Ascending aorta (tissue), 2 donors: ENCODE measurements at regions of chr14 and their contacts with region 1.

Region 1: GRCh38 chr14:20989572-20990551 is at the start of gene METTL17:
- DNase-seq: peak; percentile 65 to 97
- H3K4me3 ChIP-seq: peak within 1 kb of the TSS; percentile 88 to 97
- H3K27ac ChIP-seq: peak within 1 kb of the TSS; percentile 88 to 94
- H3K4me1 ChIP-seq: peaks cover 27 to 38% of the 10 kb centered on the region in 2 donors
- H3K27me3 ChIP-seq: no peaks in the 10 kb centered on the region
- CTCF ChIP-seq: no peak
- total RNA-seq, gene METTL17: 38.8 TPM

Region 2: DNA sequence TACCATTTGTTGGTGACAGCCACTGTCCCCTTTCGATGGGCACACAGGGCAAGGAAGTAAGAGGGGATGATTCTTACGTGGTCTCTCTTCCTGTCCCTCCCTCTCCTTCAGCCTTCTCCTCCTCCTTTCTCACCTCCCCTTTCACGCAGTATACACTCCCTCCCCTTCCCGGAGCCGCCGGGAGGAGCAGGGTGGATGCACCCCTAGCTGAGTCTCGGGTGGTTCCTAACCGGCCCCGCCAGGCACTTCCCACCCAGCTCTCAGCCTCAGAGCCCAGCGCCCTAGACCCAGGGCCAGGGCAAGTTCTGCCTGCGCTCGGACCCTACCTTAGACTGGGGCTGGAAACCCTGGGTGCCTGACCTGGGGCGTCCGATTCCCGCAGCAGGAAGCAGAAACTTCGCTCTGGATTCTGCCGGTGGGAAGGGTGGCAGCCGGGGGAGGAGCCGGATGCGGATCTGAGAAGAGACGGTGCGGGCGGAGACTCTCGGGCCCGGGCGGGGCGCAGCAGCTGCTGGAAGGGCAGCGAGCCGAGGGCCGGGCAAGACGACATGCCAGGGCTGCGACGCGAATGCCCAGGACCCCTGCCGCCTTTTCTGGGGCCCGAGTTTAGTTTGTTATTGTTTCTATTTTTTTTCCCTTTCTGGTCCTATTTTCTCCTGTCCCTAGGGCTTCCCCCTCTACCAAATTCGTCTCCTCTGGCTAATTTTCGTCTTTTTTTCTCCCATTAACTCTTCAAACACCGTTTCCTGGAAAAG is 576.6 kb before region 1 on chr14 and contains the start of gene TEP1:
- intact Hi-C with region 1: loop called (anchors 5 kb)
- DNase-seq: peak; percentile 45 to 95
- H3K4me3 ChIP-seq: peak within 1 kb of the TSS; percentile 85 to 88
- H3K27ac ChIP-seq: peak within 1 kb of the TSS; percentile 97 to 98
- H3K4me1 ChIP-seq: peaks cover 0 to 5% of the 10 kb centered on the region in 2 donors
- H3K27me3 ChIP-seq: no peaks in the 10 kb centered on the region
- CTCF ChIP-seq: no peak
- total RNA-seq, gene TEP1: 43.7 TPM

Region 3: GRCh38 chr14:20789230-20789813 is 200.5 kb before region 1 on chr14:
- intact Hi-C with region 1: no loop called
- DNase-seq: no peak
- H3K4me3 ChIP-seq: no peak overlapping the region
- H3K27ac ChIP-seq: no peak overlapping the region
- H3K4me1 ChIP-seq: no peaks in the 10 kb centered on the region
- H3K27me3 ChIP-seq: no peaks in the 10 kb centered on the region
- CTCF ChIP-seq: no peak

Region 4: GRCh38 chr14:20846560-20846959 is 143.3 kb before region 1 on chr14:
- intact Hi-C with region 1: no loop called
- DNase-seq: no peak
- H3K4me3 ChIP-seq: no peak overlapping the region
- H3K27ac ChIP-seq: no peak overlapping the region
- H3K4me1 ChIP-seq: no peaks in the 10 kb centered on the region
- H3K27me3 ChIP-seq: no peaks in the 10 kb centered on the region
- CTCF ChIP-seq: no peak

Region 5: GRCh38 chr14:21024585-21025370 is 34.9 kb after region 1 on chr14 and contains the start of gene NDRG2:
- intact Hi-C with region 1: loop called (anchors 1 kb)
- DNase-seq: peak in 1 of 2 donors; percentile 85
- H3K4me3 ChIP-seq: peak within 1 kb of the TSS; percentile 67 to 93
- H3K27ac ChIP-seq: peak within 1 kb of the TSS; percentile 84 to 88
- H3K4me1 ChIP-seq: peaks cover 6 to 20% of the 10 kb centered on the region in 2 donors
- H3K27me3 ChIP-seq: no peaks in the 10 kb centered on the region
- CTCF ChIP-seq: no peak
- total RNA-seq, gene NDRG2: 216 TPM

Region 6: DNA sequence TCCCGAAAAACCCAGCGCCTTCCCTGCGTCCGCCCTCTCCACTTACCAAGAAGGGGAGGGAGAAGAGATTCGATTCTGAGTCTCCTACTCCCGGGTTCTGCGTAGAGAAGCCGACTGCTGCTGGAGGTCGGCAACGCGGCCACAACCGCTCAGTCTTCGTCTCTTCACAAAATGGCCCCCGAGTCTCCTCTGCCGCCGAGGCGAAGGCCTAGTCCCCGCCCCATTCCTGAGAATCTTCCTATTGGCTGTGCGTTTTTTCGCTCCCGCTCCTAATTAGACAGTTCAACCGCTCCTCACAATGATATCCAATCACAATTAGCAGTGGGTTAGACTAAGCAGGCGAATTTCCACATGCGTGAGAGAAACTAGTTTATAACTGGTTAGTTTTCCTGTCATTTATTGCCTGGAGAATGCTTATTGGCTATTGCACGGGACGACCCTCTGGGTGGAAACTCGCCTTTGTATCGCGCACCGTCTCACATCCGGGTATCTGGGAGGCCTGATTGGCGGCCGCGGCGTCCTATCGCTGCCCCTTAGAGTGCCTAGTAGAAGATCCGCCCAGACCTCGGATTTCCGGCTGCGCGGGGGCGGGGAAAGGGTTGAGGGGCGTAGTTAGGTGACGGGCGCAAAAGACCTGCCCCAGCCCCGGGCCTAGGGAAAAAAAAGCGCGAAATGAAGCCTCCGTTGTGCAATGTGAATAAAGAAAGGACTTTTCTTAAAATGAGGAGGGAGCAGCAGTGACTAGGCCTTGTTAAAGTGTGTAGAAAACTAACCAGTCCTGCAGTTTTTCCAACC is 279.6 kb after region 1 on chr14 and contains the start of gene HNRNPC:
- intact Hi-C with region 1: loop called (anchors 10 kb)
- DNase-seq: peak; percentile 100
- H3K4me3 ChIP-seq: peak within 1 kb of the TSS; percentile 67 to 95
- H3K27ac ChIP-seq: peak within 1 kb of the TSS; percentile 96 to 98
- H3K4me1 ChIP-seq: peaks cover 13% of the 10 kb centered on the region in 2 donors
- H3K27me3 ChIP-seq: no peaks in the 10 kb centered on the region
- CTCF ChIP-seq: no peak
- total RNA-seq, gene HNRNPC: 303 TPM